T-cell (primary cell): ENCODE measurements at regions of chr10 and their contacts with region 1.

Region 1: GRCh38 chr10:30783939-30784500 is 154.5 kb upstream of the LYZL2 start:
- DNase-seq: peak; percentile 70 to 91 (median 81)
- ATAC-seq: peak; percentile 85 to 92 (median 89)
- H3K4me3 ChIP-seq: peak overlapping the region; percentile 48 to 53
- H3K4me3 Mint-ChIP-seq: peak overlapping the region; percentile 76 to 83 (median 80)
- H3K27ac ChIP-seq: peak overlapping the region; percentile 49
- H3K27ac Mint-ChIP-seq: peak overlapping the region; percentile 84
- H3K4me1 ChIP-seq: peaks cover 5 to 45% of the 10 kb centered on the region in 2 experiments
- H3K4me1 Mint-ChIP-seq: peaks cover 18 to 26% (median 24%) of the 10 kb centered on the region in 3 donors
- H3K27me3 ChIP-seq: no peaks in the 10 kb centered on the region
- H3K27me3 Mint-ChIP-seq: peaks cover 0 to 2% of the 10 kb centered on the region in 2 donors

Region 2: GRCh38 chr10:31031558-31032257 is 247.7 kb after region 1 on chr10 and contains the start of gene ZNF438:
- CTCF ChIA-PET with region 1: interaction called, 3 to 26 read pairs
- POLR2A ChIA-PET with region 1: interaction called in 1 of 2 experiments, 3 read pairs
- DNase-seq: peak; percentile 83 to 97 (median 92)
- ATAC-seq: peak; percentile 80 to 88 (median 83)
- H3K4me3 ChIP-seq: peak within 1 kb of the TSS; percentile 73 to 82
- H3K4me3 Mint-ChIP-seq: peak within 1 kb of the TSS; percentile 86 to 88 (median 87)
- H3K27ac ChIP-seq: peak within 1 kb of the TSS; percentile 100
- H3K27ac Mint-ChIP-seq: peak within 1 kb of the TSS; percentile 97
- H3K4me1 ChIP-seq: peaks cover 4 to 19% of the 10 kb centered on the region in 2 experiments
- H3K4me1 Mint-ChIP-seq: peaks cover 13 to 19% (median 14%) of the 10 kb centered on the region in 3 donors
- H3K27me3 ChIP-seq: no peaks in the 10 kb centered on the region
- H3K27me3 Mint-ChIP-seq: no peaks in the 10 kb centered on the region
- total RNA-seq, gene ZNF438: 2.7 to 3.6 (median 3.4) TPM

Region 3: DNA sequence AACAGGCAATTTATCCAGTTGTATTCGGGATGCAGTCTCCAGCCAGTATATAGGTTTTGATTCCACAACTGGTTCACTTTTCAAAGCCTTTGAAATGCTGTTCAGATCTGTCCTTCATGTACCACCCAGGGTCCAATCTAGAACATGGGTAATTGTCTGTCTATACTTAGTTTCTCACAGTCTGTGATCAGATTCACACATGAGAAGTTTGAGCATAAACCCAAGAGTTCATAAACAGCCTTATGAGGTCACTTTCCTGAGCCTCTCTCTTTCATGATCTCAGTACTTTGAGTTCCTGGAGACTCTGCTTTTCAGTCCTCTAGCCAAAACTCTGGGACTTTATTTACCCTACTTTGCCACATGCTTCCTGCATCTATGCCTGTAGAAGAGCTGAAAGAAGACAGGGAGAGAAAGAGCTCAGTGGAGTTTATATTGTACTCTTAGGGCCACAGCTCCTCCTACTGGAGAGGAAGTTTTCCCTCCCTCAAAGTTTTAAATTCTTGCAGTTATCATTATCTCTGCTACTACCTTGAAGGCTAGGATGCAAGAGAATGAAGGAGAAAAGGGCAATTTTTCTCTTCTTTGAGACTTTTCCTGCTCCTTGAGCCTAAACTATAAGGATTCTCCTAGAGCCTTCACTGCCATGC is 707.0 kb after region 1 on chr10:
- CTCF ChIA-PET with region 1: interaction called, 4 to 21 read pairs
- POLR2A ChIA-PET with region 1: no interaction called
- DNase-seq: peak in 9 of 35 experiments; percentile 5 to 61 (median 12)
- ATAC-seq: peak in 3 of 4 experiments; percentile 17 to 59 (median 52)
- H3K4me3 ChIP-seq: no peak overlapping the region
- H3K4me3 Mint-ChIP-seq: no peak overlapping the region
- H3K27ac ChIP-seq: no peak overlapping the region
- H3K27ac Mint-ChIP-seq: no peak overlapping the region
- H3K4me1 ChIP-seq: no peaks in the 10 kb centered on the region
- H3K4me1 Mint-ChIP-seq: peaks cover 0 to 4% (median 3%) of the 10 kb centered on the region in 3 donors
- H3K27me3 ChIP-seq: no peaks in the 10 kb centered on the region
- H3K27me3 Mint-ChIP-seq: no peaks in the 10 kb centered on the region

Region 4: GRCh38 chr10:31770307-31770902 is 986.4 kb after region 1 on chr10:
- CTCF ChIA-PET with region 1: interaction called, 4 to 11 read pairs
- POLR2A ChIA-PET with region 1: no interaction called
- DNase-seq: peak in 33 of 35 experiments; percentile 25 to 71 (median 50)
- ATAC-seq: peak; percentile 73 to 91 (median 85)
- H3K4me3 ChIP-seq: no peak overlapping the region
- H3K4me3 Mint-ChIP-seq: no peak overlapping the region
- H3K27ac ChIP-seq: no peak overlapping the region
- H3K27ac Mint-ChIP-seq: no peak overlapping the region
- H3K4me1 ChIP-seq: no peaks in the 10 kb centered on the region
- H3K4me1 Mint-ChIP-seq: peaks cover 0 to 6% (median 1%) of the 10 kb centered on the region in 3 donors
- H3K27me3 ChIP-seq: peaks cover 0 to 6% of the 10 kb centered on the region in 2 experiments
- H3K27me3 Mint-ChIP-seq: no peaks in the 10 kb centered on the region

Region 5: GRCh38 chr10:31808258-31809218 is 1024.5 kb after region 1 on chr10:
- CTCF ChIA-PET with region 1: interaction called, 11 to 12 read pairs
- POLR2A ChIA-PET with region 1: no interaction called
- DNase-seq: peak in 9 of 35 experiments; percentile 0 to 75 (median 4)
- ATAC-seq: peak; percentile 40 to 62 (median 51)
- H3K4me3 ChIP-seq: no peak overlapping the region
- H3K4me3 Mint-ChIP-seq: peak overlapping the region in 1 of 3 donors; percentile 44
- H3K27ac ChIP-seq: peak overlapping the region; percentile 15
- H3K27ac Mint-ChIP-seq: peak overlapping the region; percentile 71 to 80
- H3K4me1 ChIP-seq: peaks cover 0 to 4% of the 10 kb centered on the region in 2 experiments
- H3K4me1 Mint-ChIP-seq: peaks cover 5 to 11% (median 8%) of the 10 kb centered on the region in 3 donors
- H3K27me3 ChIP-seq: no peaks in the 10 kb centered on the region
- H3K27me3 Mint-ChIP-seq: no peaks in the 10 kb centered on the region